Activated CD4-positive, alpha-beta memory T cell treated with anti-CD3 and anti-CD28 coated beads, Interleukin-2, amount 10 ng/mL, durations not matched to agents 7 days and 5 days (primary cell): ENCODE measurements at regions of chr6 and their contacts with region 1.

Region 1: DNA sequence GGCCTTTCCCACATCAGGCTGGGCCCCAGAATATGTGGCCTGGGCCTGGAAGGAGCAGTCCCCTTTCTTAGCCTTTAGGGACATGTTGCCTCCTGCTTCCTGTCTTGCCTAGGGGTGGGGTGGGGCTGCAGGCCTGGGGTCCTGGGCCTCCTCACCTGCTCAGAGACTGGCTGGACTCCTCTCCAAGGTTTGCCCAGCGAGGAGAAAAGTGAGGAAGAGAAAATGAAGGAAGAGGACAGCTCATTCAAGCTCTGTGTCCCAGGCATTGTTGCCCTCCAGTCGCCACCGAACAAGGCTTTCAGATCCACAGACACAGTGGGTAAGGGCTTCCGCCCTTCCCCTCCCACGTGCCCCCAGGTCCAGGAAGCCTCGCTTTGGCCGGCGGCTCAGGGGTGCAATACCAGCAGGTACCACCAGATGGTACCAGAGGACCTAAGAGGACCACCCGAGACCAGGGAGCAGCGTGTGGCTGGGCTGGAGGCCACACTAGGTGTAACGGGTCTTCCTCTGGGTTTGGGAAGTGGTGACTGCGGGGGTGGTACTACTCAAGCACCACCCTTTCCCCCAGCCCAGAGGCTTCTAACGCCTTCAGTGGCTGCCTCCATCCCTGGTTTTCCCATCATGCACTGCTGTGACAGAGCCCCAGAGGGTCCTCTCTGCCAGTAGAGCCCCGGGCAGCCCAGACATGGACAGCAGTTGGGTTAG is 5.5 kb upstream of the BAK1 start:
- DNase-seq: peak; percentile 91
- H3K4me3 Mint-ChIP-seq: peak overlapping the region; percentile 66
- H3K27ac Mint-ChIP-seq: peak overlapping the region; percentile 89
- H3K4me1 Mint-ChIP-seq: peaks cover 38% of the 10 kb centered on the region
- H3K27me3 Mint-ChIP-seq: no peaks in the 10 kb centered on the region

Region 2: GRCh38 chr6:33405386-33405940 is 180.1 kb before region 1 on chr6:
- CTCF ChIA-PET with region 1: no interaction called
- POLR2A ChIA-PET with region 1: no interaction called
- DNase-seq: peak; percentile 54
- H3K4me3 Mint-ChIP-seq: no peak overlapping the region
- H3K27ac Mint-ChIP-seq: peak overlapping the region; percentile 67
- H3K4me1 Mint-ChIP-seq: peaks cover 43% of the 10 kb centered on the region
- H3K27me3 Mint-ChIP-seq: no peaks in the 10 kb centered on the region

Region 3: DNA sequence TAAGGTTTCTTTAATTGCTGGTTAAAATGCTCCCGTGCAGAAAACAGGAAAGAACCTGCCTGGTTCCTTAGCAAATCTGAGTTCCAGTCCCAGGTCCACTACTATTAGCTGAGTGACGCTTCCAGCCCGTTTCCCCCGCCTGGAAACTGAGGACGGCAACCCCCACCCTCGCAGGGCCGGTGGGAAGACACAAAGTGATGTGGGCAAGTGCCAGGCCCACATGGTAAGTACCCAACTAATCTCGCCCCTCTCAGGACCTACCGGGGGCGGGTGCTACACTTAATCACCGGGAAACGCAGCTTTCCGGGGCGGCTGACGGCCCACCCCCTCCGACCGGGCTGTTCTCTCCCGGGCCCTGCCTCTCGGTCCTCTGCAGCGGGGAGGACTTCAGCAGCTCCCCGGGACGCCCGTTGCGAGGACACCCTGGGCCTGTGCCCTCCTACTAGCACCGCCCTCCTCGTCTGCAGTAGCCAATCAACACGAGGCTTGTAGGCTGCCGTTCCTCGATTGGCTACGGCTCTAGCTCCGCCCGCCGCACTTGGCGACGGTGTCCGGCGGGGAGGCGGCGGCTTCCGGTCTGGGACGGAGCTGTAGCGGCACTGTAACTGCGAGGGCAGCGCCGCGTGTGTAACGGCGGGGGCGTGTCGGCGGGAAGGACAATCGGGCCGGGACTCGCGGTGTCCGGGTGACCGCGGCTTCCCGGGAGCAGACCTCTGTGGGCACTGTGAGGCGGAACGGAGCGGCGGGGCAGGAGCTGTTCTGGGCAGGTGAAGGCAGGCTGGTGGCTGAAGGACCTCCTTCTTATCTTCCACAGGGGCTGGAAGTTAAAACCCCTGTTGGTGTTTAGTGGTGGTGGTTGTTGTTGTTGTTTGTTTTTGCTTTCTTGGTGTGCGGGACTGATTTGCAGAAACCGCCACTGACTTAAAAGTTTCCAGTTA is 131.3 kb before region 1 on chr6 and contains the start of gene ZBTB9:
- CTCF ChIA-PET with region 1: interaction called, 23 read pairs
- POLR2A ChIA-PET with region 1: interaction called, 18 read pairs
- DNase-seq: peak; percentile 96
- H3K4me3 Mint-ChIP-seq: peak within 1 kb of the TSS; percentile 83
- H3K27ac Mint-ChIP-seq: peak within 1 kb of the TSS; percentile 79
- H3K4me1 Mint-ChIP-seq: peaks cover 25% of the 10 kb centered on the region
- H3K27me3 Mint-ChIP-seq: no peaks in the 10 kb centered on the region
- total RNA-seq, gene ZBTB9: 6.9 to 7.4 TPM

Region 4: DNA sequence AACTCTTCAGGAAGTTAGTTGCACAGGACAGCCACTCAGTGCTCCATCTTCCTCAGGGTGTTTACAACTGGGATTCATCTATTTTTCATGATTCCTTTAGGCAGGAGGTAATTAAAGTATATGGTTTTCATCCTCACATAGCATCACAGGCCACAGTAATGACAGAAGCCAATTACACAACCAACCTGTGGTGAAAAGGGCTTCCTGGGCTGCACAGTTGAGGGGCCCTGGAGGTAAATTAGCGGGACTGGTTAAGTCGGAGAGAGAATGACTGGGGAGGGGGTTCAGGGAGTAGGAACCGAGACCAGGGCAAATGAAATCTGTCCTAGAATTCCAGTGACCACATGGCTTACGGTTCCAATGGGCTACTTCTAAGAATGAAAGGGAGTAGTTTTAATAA is 42.4 kb before region 1 on chr6:
- CTCF ChIA-PET with region 1: no interaction called
- POLR2A ChIA-PET with region 1: no interaction called
- DNase-seq: no peak
- H3K4me3 Mint-ChIP-seq: no peak overlapping the region
- H3K27ac Mint-ChIP-seq: no peak overlapping the region
- H3K4me1 Mint-ChIP-seq: peaks cover 13% of the 10 kb centered on the region
- H3K27me3 Mint-ChIP-seq: no peaks in the 10 kb centered on the region

Region 5: GRCh38 chr6:33570806-33571636 is 14.5 kb before region 1 on chr6:
- CTCF ChIA-PET with region 1: interaction called, 21 read pairs
- POLR2A ChIA-PET with region 1: interaction called, 71 read pairs
- DNase-seq: peak; percentile 96
- H3K4me3 Mint-ChIP-seq: peak overlapping the region; percentile 75
- H3K27ac Mint-ChIP-seq: peak overlapping the region; percentile 100
- H3K4me1 Mint-ChIP-seq: peaks cover 61% of the 10 kb centered on the region
- H3K27me3 Mint-ChIP-seq: no peaks in the 10 kb centered on the region

Region 6: GRCh38 chr6:33607784-33608161 is 22.2 kb after region 1 on chr6:
- CTCF ChIA-PET with region 1: interaction called, 34 read pairs
- POLR2A ChIA-PET with region 1: interaction called, 13 read pairs
- DNase-seq: peak; percentile 67
- H3K4me3 Mint-ChIP-seq: no peak overlapping the region
- H3K27ac Mint-ChIP-seq: no peak overlapping the region
- H3K4me1 Mint-ChIP-seq: peaks cover 6% of the 10 kb centered on the region
- H3K27me3 Mint-ChIP-seq: peaks cover 16% of the 10 kb centered on the region

Region 7: DNA sequence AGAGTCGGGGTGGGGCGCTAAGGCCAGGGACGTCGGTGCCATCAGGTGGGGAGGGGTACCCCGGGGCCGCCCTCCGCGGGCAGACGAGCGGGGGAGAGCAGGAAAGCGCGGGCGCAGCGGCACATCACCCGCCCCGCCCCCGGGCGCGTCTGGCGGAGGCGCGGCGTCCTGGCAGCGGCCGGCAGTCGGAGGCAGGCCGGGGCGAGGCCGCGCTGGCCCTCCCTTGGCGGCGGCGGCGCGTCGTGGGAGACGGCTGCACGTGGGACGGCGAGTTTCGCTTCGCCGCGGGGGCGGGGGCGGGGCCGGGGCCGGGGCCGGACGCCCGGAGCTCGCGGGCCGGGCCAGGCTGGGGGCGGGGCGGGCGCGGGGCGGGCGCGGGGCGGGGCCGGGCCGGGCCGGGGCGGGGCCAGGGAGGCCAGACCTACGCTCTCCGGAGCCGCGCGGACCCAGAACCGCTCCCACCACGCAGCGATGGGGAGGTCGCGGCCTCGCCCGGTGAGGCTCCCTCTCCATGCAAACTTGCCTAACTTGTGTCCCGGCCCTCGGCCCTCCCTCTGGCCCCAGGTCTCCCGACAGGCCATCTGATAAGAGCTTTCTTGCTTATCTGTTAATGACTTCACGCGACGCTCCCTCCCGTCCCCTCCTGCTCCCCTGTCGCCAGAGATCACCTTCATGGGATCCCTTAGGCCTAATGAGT is 48.1 kb after region 1 on chr6:
- CTCF ChIA-PET with region 1: interaction called, 11 read pairs
- POLR2A ChIA-PET with region 1: no interaction called
- DNase-seq: peak; percentile 70
- H3K4me3 Mint-ChIP-seq: peak overlapping the region; percentile 63
- H3K27ac Mint-ChIP-seq: no peak overlapping the region
- H3K4me1 Mint-ChIP-seq: peaks cover 75% of the 10 kb centered on the region
- H3K27me3 Mint-ChIP-seq: no peaks in the 10 kb centered on the region

Region 8: GRCh38 chr6:33668927-33669326 is 83.4 kb after region 1 on chr6:
- CTCF ChIA-PET with region 1: interaction called, 12 read pairs
- POLR2A ChIA-PET with region 1: no interaction called
- DNase-seq: peak; percentile 84
- H3K4me3 Mint-ChIP-seq: no peak overlapping the region
- H3K27ac Mint-ChIP-seq: peak overlapping the region; percentile 90
- H3K4me1 Mint-ChIP-seq: peaks cover 21% of the 10 kb centered on the region
- H3K27me3 Mint-ChIP-seq: no peaks in the 10 kb centered on the region

Region 9: DNA sequence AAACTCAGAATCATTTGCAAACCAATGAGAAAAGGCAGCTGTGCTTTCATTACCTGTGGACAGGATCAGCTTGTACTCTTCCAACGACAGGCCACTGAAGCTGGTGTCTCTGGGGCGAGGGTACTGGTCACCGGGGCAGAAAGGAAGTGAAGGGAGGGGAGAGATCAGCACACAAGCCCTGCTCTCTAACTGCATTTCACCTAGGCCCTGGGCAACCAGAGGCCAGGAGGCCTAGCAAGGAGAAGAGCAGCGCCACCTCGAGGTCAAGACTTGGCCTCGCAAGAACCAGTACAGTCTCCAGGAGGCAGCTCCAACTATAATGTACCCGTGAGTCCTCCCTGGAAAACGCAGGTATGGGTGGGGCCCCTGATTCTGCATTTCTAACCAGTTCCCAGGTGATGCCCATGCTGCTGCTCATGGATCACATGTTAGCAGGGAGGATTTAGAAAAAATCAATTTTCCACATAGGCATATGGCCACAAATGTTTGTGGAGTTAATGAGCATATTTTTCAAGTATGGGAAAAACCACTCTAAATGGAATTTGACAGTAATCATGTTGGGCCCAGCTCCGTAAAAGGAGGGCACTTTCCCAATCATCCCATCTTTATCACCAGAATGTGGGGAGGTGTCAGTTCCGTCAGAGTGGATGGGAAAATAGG is 115.0 kb after region 1 on chr6:
- CTCF ChIA-PET with region 1: interaction called, 27 read pairs
- POLR2A ChIA-PET with region 1: interaction called, 4 read pairs
- DNase-seq: peak; percentile 84
- H3K4me3 Mint-ChIP-seq: no peak overlapping the region
- H3K27ac Mint-ChIP-seq: peak overlapping the region; percentile 58
- H3K4me1 Mint-ChIP-seq: peaks cover 55% of the 10 kb centered on the region
- H3K27me3 Mint-ChIP-seq: no peaks in the 10 kb centered on the region

Region 10: DNA sequence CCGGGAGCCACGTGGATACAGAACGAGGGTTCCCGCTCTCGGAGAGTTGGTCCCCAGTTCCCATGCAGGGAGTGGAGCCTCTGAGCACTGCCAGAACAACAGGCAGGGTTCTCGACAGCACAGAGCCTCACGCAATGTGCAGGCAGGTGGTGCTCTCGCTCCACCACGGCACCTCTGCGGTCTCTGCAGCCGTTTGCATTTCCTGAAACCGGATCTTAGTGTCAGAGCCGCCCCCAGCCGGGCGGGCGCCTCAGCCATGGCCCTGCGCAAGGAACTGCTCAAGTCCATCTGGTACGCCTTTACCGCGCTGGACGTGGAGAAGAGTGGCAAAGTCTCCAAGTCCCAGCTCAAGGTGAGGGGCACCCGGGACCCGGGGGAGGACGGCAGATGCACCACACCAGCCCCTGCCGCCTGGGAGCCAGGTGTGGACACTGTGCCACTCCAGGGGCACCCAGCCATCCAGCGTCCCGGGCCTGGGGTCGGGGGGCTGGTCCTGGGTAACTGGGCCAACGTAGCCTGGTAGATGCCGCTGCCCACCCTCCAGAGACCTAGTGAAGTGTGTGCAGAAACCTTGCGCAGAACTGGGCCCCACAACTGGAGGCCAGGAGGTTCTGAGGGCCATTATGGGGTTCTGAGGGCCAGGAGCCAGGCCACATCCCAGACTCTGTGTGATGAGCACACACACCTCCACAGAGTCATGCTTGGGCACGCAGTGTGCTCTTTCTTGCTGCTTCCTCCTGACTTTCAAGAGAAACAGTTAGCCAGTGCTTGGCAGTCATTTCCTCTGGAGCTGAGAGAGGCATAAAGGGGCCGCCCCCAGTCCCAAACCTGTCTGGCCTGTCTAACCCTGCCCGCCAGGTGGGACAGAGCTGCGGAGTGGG is 1712.3 kb after region 1 on chr6 and contains the start of gene DEF6:
- CTCF ChIA-PET with region 1: no interaction called
- POLR2A ChIA-PET with region 1: no interaction called
- DNase-seq: peak; percentile 94
- H3K4me3 Mint-ChIP-seq: peak within 1 kb of the TSS; percentile 79
- H3K27ac Mint-ChIP-seq: peak within 1 kb of the TSS; percentile 95
- H3K4me1 Mint-ChIP-seq: peaks cover 50% of the 10 kb centered on the region
- H3K27me3 Mint-ChIP-seq: no peaks in the 10 kb centered on the region
- total RNA-seq, gene DEF6: 201 to 215 TPM